ENCODE measurements at regions of chr12 and their contacts with region 1.

Region 1: GRCh38 chr12:546921-547845 is 87.4 kb downstream of the B4GALNT3 start:
- DNase-seq: peak; percentile 84
- ATAC-seq: peak; percentile 85
- H3K4me3 Mint-ChIP-seq: no peak overlapping the region
- H3K27ac Mint-ChIP-seq: no peak overlapping the region
- H3K4me1 Mint-ChIP-seq: peaks cover 24% of the 10 kb centered on the region
- H3K27me3 Mint-ChIP-seq: peaks cover 4% of the 10 kb centered on the region

Region 2: DNA sequence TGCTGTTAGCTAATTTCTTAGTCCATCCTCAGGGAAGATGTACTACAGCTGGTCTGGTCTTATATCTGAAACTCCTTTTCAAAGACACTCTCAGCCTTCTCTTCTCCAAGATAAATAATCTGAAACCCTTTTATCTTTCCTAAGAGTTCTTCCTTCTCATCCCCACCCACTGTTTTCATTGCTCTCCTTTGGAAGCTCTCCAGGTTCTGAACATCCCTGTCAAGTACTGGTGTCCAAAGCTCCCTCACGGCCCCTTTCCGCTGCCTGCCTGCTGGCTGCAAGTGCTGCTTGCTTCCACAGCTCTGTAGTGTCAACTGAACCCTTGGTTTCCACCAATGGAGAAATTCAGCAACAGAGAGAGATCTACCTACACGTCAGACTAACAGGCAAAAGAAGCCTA is 278.0 kb before region 1 on chr12:
- CTCF ChIA-PET with region 1: no interaction called
- POLR2A ChIA-PET with region 1: no interaction called
- intact Hi-C with region 1: no loop called
- DNase-seq: no peak
- ATAC-seq: no peak
- H3K4me3 Mint-ChIP-seq: no peak overlapping the region
- H3K27ac Mint-ChIP-seq: no peak overlapping the region
- H3K4me1 Mint-ChIP-seq: peaks cover 12% of the 10 kb centered on the region
- H3K27me3 Mint-ChIP-seq: peaks cover 1% of the 10 kb centered on the region

Region 3: GRCh38 chr12:459430-460258 is 87.5 kb before region 1 on chr12 and contains the start of gene B4GALNT3:
- CTCF ChIA-PET with region 1: interaction called, 130 read pairs
- POLR2A ChIA-PET with region 1: no interaction called
- intact Hi-C with region 1: no loop called
- DNase-seq: peak; percentile 63
- ATAC-seq: peak; percentile 60
- H3K4me3 Mint-ChIP-seq: peak within 1 kb of the TSS; percentile 74
- H3K27ac Mint-ChIP-seq: no peak within 1 kb of the TSS
- H3K4me1 Mint-ChIP-seq: peaks cover 15% of the 10 kb centered on the region
- H3K27me3 Mint-ChIP-seq: peaks cover 26% of the 10 kb centered on the region
- total RNA-seq, gene B4GALNT3: 2.2 to 3.3 TPM

Region 4: GRCh38 chr12:510071-510825 is 36.9 kb before region 1 on chr12:
- CTCF ChIA-PET with region 1: no interaction called
- POLR2A ChIA-PET with region 1: no interaction called
- intact Hi-C with region 1: no loop called
- DNase-seq: no peak
- ATAC-seq: no peak
- H3K4me3 Mint-ChIP-seq: no peak overlapping the region
- H3K27ac Mint-ChIP-seq: no peak overlapping the region
- H3K4me1 Mint-ChIP-seq: no peaks in the 10 kb centered on the region
- H3K27me3 Mint-ChIP-seq: peaks cover 3% of the 10 kb centered on the region

Region 5: GRCh38 chr12:530308-530707 is 16.9 kb before region 1 on chr12:
- CTCF ChIA-PET with region 1: interaction called, 12 read pairs
- POLR2A ChIA-PET with region 1: no interaction called
- intact Hi-C with region 1: no loop called
- DNase-seq: no peak
- ATAC-seq: no peak
- H3K4me3 Mint-ChIP-seq: no peak overlapping the region
- H3K27ac Mint-ChIP-seq: no peak overlapping the region
- H3K4me1 Mint-ChIP-seq: no peaks in the 10 kb centered on the region
- H3K27me3 Mint-ChIP-seq: no peaks in the 10 kb centered on the region

Region 6: DNA sequence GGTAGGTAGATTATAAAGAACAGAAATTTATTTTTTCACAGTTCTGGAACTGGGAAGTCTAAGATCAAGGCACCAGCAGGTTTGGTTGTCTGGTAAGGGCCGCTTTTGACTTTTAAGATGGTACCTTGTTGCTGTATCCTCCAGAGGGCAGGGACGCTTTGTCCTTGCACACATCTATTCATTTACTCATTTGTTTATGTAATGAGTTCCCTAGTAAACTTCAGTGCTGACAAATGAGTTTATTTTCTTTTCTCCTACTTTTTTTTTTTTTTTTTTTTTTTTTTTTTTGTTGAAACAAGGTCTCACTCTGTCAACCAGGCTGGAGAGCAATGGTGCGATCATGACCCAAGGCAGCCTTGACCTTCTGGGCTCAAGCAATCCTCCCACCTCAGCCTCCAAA is 851.5 kb after region 1 on chr12:
- CTCF ChIA-PET with region 1: no interaction called
- POLR2A ChIA-PET with region 1: no interaction called
- intact Hi-C with region 1: no loop called
- DNase-seq: no peak
- ATAC-seq: no peak
- H3K4me3 Mint-ChIP-seq: no peak overlapping the region
- H3K27ac Mint-ChIP-seq: no peak overlapping the region
- H3K4me1 Mint-ChIP-seq: no peaks in the 10 kb centered on the region
- H3K27me3 Mint-ChIP-seq: no peaks in the 10 kb centered on the region

Region 7: DNA sequence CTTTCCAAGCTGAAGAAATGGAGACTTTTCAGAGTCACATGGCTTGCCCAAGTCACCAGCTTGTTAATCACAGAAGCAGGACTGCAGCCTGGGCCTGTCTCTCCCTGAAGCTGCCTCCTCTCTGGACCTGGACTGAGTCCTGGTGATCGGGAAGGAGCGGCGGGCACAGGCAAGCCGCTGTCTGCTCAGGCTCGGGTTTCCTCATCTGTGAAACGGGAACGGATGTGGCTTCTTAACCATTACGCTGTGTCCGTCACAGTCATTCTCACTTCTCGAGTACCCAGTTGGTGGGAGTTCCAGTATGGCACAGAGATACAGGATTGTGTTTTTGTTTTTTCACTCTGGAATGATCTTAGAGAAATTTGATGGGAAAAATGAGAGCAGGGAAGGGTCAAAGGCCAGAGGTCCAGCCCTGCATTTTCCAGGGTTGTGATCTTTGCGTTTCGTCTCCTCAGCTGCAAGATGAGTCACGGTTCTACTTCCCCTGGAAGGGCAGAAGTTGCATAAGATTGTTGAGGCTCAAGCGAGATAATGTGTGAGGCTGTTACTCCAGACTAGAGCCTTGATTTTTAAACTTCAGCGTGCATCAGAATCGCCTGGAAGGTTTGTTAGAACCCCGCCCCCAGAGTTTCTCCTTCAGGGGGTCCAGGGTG is 1265.6 kb after region 1 on chr12:
- CTCF ChIA-PET with region 1: no interaction called
- POLR2A ChIA-PET with region 1: no interaction called
- intact Hi-C with region 1: no loop called
- DNase-seq: no peak
- ATAC-seq: peak; percentile 17
- H3K4me3 Mint-ChIP-seq: no peak overlapping the region
- H3K27ac Mint-ChIP-seq: no peak overlapping the region
- H3K4me1 Mint-ChIP-seq: peaks cover 9% of the 10 kb centered on the region
- H3K27me3 Mint-ChIP-seq: no peaks in the 10 kb centered on the region